Gastrocnemius medialis (tissue), 4 donors: ENCODE measurements at regions of chr11 and their contacts with region 1.

Region 1: DNA sequence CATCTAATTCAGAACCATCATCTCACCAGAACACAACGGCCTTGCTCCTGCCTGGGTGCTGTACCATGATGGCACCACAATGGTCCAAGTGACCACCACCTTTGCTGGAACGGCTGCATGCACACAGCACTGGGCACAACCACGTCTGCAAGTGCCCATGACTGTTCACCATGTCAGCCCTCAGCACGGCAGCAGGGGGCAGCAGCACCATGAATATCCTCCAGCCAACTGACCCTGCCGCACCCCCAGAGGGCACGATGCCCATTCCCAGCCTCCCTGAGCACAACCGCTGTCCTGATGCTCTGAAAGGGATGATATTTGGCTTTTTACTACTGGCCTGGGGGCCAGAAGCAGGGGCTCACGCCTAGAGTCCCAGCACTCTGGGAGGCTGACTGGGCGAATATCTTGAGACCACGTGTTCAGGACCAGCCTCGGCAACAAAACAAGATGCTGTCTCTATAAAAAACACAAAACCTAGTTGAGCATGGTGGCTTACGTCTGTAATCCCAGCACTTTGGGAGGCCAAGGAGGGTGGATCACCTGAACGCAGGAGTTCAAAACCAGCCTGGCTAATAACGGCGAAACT is 25.7 kb downstream of the DRD4 start:
- DNase-seq: peak in 1 of 2 donors; percentile 48
- ATAC-seq: no peak
- H3K4me3 ChIP-seq: no peak overlapping the region
- H3K27ac ChIP-seq: no peak overlapping the region
- H3K4me1 ChIP-seq: peaks cover 9 to 13% of the 10 kb centered on the region in 2 donors
- H3K27me3 ChIP-seq: no peaks in the 10 kb centered on the region
- CTCF ChIP-seq: peak; percentile 26 to 81 (median 63)
- POLR2A ChIP-seq: no peak

Region 2: GRCh38 chr11:798093-798713 is 135.4 kb after region 1 on chr11 and contains the start of gene SLC25A22:
- in situ Hi-C with region 1: no loop called
- intact Hi-C with region 1: loop called (anchors 5 kb)
- DNase-seq: peak in 1 of 2 donors; percentile 57
- ATAC-seq: peak; percentile 67 to 79
- H3K4me3 ChIP-seq: peak within 1 kb of the TSS; percentile 64 to 71 (median 68)
- H3K27ac ChIP-seq: peak within 1 kb of the TSS; percentile 57 to 69 (median 64)
- H3K4me1 ChIP-seq: peaks cover 11 to 35% of the 10 kb centered on the region in 2 donors
- H3K27me3 ChIP-seq: peaks cover 10 to 24% (median 23%) of the 10 kb centered on the region in 3 donors
- CTCF ChIP-seq: peak; percentile 73 to 97 (median 92)
- POLR2A ChIP-seq: no peak
- total RNA-seq, gene SLC25A22: 0.80 to 1.5 (median 1.0) TPM in 3 of 4 donors, not detected in the other

Region 3: DNA sequence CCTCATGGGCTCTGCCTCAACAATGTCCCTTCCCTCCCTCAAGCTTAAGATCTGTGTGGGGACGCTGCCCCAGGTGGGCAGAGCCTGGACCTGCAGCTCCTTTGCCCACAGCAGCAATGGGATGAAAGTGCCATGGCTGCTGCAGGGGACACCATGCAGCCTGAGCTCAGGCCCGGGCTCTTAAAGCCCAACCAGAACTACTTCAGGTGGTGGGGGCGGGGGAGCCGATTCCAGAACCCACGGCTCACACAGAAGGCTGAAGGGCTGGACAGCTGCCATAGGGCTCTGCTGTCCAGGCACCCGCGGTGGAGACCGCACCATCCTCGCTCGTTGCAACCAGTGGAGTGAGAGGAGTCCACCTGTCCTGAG is 235.3 kb after region 1 on chr11:
- in situ Hi-C with region 1: no loop called
- intact Hi-C with region 1: no loop called
- DNase-seq: no peak
- ATAC-seq: no peak
- H3K4me3 ChIP-seq: no peak overlapping the region
- H3K27ac ChIP-seq: no peak overlapping the region
- H3K4me1 ChIP-seq: no peaks in the 10 kb centered on the region
- H3K27me3 ChIP-seq: no peaks in the 10 kb centered on the region
- CTCF ChIP-seq: no peak
- POLR2A ChIP-seq: no peak